ENCODE measurements at regions of chr14 and their contacts with region 1.

Region 1: GRCh38 chr14:75249958-75250336 is 28.7 kb upstream of the FOS start:
- DNase-seq: no peak
- H3K4me3 ChIP-seq: no peak overlapping the region
- H3K27ac ChIP-seq: no peak overlapping the region
- H3K27me3 ChIP-seq: no peaks in the 10 kb centered on the region
- CTCF ChIP-seq: no peak

Region 2: GRCh38 chr14:75182841-75183624 is 66.9 kb before region 1 on chr14:
- intact Hi-C with region 1: loop called in 1 of 2 experiments (anchors 5 kb)
- DNase-seq: no peak
- H3K4me3 ChIP-seq: no peak overlapping the region
- H3K27ac ChIP-seq: peak overlapping the region in 8 of 59 donors; percentile 2 to 40 (median 26)
- H3K27me3 ChIP-seq: no peaks in the 10 kb centered on the region
- CTCF ChIP-seq: no peak

Region 3: DNA sequence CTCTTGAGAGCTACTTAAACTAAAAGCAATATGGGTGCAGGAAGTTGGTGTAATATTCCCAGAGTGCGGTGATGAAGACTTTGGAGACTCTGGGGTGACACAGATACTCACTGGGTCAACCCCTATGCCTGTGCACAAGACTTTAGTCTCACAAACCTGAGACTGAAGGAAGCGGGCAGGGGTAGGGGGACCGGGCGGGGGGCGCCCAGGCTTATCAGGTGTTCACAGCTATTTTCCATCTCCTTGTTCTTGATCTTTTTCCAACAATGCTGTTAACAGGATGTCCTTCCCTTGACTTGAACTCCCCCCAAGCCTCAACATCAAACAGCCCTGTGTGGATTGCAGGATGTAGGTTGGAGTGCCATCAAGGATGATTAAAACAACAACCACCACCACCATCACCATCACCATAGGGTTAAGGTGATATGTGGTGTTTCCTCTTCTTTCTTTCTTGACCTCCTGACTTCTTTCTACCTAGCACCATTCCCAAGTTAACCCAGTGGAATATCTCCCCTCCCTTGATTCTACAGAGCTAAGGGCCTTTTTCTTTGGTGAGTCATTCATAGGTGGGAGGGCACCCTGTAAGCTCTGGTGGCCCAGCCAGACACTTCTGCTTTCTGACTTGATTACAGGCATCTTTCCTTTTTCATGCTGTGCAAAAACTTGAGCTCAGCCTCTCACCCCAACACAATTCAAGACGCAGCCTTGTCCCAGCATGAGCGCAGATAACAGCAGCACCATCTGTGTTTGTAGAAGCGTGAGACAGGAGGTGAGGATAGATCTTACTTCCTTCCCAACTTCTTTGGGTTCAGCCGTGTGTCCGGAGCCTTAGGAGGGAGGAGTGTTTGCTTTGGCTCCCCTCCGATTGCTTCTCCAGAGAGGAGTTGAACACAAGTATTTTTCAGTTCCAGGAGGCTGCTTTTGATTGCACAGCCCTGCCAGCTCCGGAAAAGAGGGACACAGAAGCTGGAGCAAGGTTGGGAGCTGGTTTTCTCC is 355.2 kb after region 1 on chr14:
- intact Hi-C with region 1: no loop called
- DNase-seq: no peak
- H3K4me3 ChIP-seq: peak overlapping the region in 4 of 59 donors; percentile 6 to 22 (median 20)
- H3K27ac ChIP-seq: peak overlapping the region in 9 of 59 donors; percentile 2 to 46 (median 23)
- H3K27me3 ChIP-seq: peaks cover 0 to 3% (median 0%) of the 10 kb centered on the region in 45 donors
- CTCF ChIP-seq: no peak

Measured in dorsolateral prefrontal cortex (tissue), 120 donors.